Transverse colon (tissue), 4 donors: ENCODE measurements at regions of chr5 and their contacts with region 1.

Region 1: GRCh38 chr5:94715671-94716211 is 97.3 kb downstream of the SLF1 start:
- DNase-seq: no peak
- H3K4me3 ChIP-seq: no peak overlapping the region
- H3K27ac ChIP-seq: no peak overlapping the region
- H3K4me1 ChIP-seq: no peaks in the 10 kb centered on the region
- H3K27me3 ChIP-seq: no peaks in the 10 kb centered on the region
- CTCF ChIP-seq: no peak
- EP300 ChIP-seq: no peak
- POLR2A ChIP-seq: no peak

Region 2: DNA sequence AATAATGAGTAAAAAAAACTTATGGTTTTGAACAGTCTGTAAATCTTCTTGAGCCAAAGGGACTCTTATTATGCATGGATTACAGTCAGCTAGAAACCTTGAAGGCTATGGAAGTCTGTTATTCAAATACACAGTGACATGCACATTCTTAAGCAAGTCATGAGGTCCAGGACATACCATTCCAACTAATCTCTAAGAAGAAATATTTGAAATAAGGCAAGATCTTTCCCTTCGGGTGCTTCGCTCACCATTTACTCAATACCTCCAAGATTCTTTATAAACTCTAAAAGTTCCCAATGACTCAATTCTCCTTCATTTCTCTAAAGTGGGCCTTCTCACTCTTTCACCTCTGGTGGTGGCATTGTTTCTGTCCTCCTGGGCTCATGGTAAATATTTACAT is 1945.8 kb before region 1 on chr5:
- in situ Hi-C with region 1: no loop called
- intact Hi-C with region 1: loop called (anchors 5 kb)
- DNase-seq: no peak
- H3K4me3 ChIP-seq: no peak overlapping the region
- H3K27ac ChIP-seq: no peak overlapping the region
- H3K4me1 ChIP-seq: no peaks in the 10 kb centered on the region
- H3K27me3 ChIP-seq: no peaks in the 10 kb centered on the region
- CTCF ChIP-seq: no peak
- EP300 ChIP-seq: no peak
- POLR2A ChIP-seq: no peak

Region 3: GRCh38 chr5:94754824-94755223 is 39.1 kb after region 1 on chr5:
- in situ Hi-C with region 1: no loop called
- intact Hi-C with region 1: no loop called
- DNase-seq: no peak
- H3K4me3 ChIP-seq: no peak overlapping the region
- H3K27ac ChIP-seq: no peak overlapping the region
- H3K4me1 ChIP-seq: no peaks in the 10 kb centered on the region
- H3K27me3 ChIP-seq: no peaks in the 10 kb centered on the region
- CTCF ChIP-seq: no peak
- EP300 ChIP-seq: no peak
- POLR2A ChIP-seq: no peak

Region 4: GRCh38 chr5:94776167-94776566 is 60.4 kb after region 1 on chr5:
- in situ Hi-C with region 1: no loop called
- intact Hi-C with region 1: loop called (anchors 2 kb)
- DNase-seq: no peak
- H3K4me3 ChIP-seq: no peak overlapping the region
- H3K27ac ChIP-seq: no peak overlapping the region
- H3K4me1 ChIP-seq: no peaks in the 10 kb centered on the region
- H3K27me3 ChIP-seq: no peaks in the 10 kb centered on the region
- CTCF ChIP-seq: no peak
- EP300 ChIP-seq: no peak
- POLR2A ChIP-seq: no peak